Mammary epithelial cell (primary cell): ENCODE measurements at regions of chr7 and their contacts with region 1.

Region 1: GRCh38 chr7:36299823-36300341 is 89.8 kb upstream of the ANLN start:
- DNase-seq: no peak
- H3K4me3 ChIP-seq: no peak overlapping the region
- H3K27ac ChIP-seq: no peak overlapping the region
- H3K4me1 ChIP-seq: peaks cover 16% of the 10 kb centered on the region
- H3K27me3 ChIP-seq: no peaks in the 10 kb centered on the region
- CTCF ChIP-seq: no peak

Region 2: DNA sequence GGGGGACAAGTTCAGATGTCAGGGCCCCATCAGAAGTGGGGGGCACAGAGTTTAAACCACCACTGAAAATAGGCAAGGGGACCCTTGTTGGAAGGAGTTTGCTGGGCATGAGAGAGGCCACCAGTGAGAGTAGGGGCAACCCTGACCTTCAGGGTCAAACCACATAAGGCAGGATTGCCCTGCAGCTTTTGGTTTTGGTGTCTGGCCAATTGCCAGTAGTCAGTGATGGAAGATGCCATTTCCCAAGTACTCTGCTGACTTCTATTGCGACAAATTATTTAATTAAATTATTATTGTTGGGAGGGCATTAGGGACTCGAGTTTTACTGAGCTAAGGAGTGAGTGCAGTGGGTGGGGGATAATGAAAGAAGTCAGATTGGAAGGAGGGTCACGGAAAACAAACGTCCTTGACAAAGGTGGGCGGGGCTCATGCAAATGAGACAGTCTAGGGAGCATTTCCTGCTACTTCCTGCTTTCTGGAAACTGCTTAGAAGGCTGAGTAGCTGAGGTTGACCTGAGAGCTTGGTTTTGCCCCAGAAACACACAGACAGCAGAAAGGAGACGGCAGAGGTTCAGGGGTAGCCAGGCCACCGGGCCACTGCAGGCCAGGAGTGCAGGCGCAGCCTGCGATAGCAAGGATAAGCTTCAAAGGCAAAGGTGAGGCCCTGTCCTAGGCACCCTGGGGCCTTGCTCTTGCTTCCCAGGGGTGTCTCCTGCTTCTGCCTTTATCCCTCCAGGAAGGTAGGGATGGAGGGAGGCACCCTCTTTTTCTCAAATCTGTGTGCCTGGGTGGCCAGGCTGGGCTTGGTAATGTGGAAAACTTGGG is 15.6 kb after region 1 on chr7:
- CTCF ChIA-PET with region 1: no interaction called
- dilution Hi-C with region 1: no loop called
- in situ Hi-C with region 1: no loop called
- intact Hi-C with region 1: loop called (anchors 1 kb)
- DNase-seq: no peak
- H3K4me3 ChIP-seq: no peak overlapping the region
- H3K27ac ChIP-seq: no peak overlapping the region
- H3K4me1 ChIP-seq: no peaks in the 10 kb centered on the region
- H3K27me3 ChIP-seq: peaks cover 2% of the 10 kb centered on the region
- CTCF ChIP-seq: no peak

Region 3: DNA sequence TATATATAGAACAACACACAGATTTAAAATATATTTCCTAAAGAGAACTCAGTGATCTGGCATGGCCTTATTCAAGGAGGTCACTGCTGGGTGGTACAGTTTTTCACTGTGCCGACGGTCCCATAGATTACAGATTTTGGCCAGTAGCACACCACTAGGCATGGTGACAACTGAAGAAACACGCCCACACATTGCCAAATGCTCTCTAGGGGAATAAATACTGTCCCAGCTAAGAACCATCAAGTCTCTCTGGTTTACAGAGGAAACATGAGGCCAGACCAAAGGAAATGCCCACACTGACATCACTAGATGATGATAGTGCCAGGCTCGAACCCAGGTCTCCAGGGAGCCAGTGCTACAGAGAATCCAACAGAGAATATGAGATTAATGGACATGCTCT is 832.0 kb after region 1 on chr7:
- CTCF ChIA-PET with region 1: no interaction called
- dilution Hi-C with region 1: no loop called
- in situ Hi-C with region 1: no loop called
- intact Hi-C with region 1: no loop called
- DNase-seq: no peak
- H3K4me3 ChIP-seq: no peak overlapping the region
- H3K27ac ChIP-seq: no peak overlapping the region
- H3K4me1 ChIP-seq: no peaks in the 10 kb centered on the region
- H3K27me3 ChIP-seq: no peaks in the 10 kb centered on the region
- CTCF ChIP-seq: no peak